Heart right ventricle (tissue), 16 donors: ENCODE measurements at regions of chr2 and their contacts with region 1.

Region 1: DNA sequence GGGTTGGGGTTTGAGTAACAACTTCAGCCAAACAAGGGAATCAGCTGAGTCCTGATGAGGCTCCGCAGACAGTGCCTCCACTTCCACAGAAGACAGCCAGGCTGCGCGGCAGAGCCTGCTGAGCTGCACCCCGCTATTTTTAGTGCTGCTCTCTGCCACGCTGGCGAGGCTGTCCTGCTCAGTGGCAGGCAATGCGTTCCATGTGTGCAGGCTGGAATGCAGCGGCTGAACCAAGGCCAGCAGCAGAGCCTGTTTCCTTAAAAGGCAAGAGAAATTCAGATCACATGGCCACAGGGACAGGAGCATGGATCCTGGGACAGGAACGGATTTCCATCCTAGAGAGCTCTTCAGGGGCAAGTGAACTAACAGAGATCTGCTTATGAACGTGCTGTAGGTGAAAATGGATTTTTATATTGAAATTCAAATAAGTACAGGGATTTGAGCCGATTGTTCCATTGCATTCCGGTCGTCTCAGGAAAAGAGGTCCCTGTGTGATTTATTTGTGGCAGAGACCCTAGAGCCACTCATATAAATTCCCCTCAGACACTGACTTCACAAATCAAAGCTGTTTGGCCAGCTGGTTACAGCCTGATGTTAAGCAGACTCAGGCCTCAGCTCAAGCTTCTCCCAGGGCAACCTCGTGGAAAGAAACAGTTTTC is 98.7 kb downstream of the COL6A3 start:
- DNase-seq: peak; percentile 88 to 91
- ATAC-seq: peak; percentile 93 to 97 (median 95)
- H3K4me3 ChIP-seq: no peak overlapping the region
- H3K27ac ChIP-seq: peak overlapping the region; percentile 85 to 96 (median 88)
- H3K4me1 ChIP-seq: peaks cover 13 to 38% (median 30%) of the 10 kb centered on the region in 9 donors
- H3K27me3 ChIP-seq: no peaks in the 10 kb centered on the region
- CTCF ChIP-seq: peak; percentile 18 to 75 (median 37)

Region 2: DNA sequence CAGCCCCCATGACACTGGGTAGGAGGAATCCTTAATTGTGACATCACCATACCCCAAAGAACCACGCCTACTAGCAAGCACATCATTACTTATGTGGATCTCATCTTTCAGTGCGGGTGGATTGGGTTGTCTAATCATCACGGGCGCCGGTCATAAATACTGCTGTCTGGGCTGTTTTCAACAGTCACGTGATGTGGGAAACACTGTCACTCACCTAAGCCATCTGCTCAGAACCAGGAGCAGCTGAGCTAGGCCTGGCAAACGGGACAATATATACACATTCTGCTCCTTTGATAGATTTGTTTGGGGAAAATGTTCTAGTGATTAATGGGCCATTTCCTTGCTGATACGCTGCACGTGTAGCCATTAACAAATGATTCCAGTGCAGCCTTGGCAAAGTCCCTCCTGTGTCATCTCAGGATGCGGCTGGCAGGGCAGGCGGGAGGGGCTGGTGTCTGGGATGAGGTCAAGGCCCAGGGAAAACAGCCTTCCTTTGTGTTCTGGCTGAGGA is 375.5 kb before region 1 on chr2:
- intact Hi-C with region 1: no loop called
- DNase-seq: no peak
- ATAC-seq: no peak
- H3K4me3 ChIP-seq: no peak overlapping the region
- H3K27ac ChIP-seq: no peak overlapping the region
- H3K4me1 ChIP-seq: no peaks in the 10 kb centered on the region
- H3K27me3 ChIP-seq: peaks cover 0 to 4% (median 0%) of the 10 kb centered on the region in 7 donors
- CTCF ChIP-seq: no peak

Region 3: DNA sequence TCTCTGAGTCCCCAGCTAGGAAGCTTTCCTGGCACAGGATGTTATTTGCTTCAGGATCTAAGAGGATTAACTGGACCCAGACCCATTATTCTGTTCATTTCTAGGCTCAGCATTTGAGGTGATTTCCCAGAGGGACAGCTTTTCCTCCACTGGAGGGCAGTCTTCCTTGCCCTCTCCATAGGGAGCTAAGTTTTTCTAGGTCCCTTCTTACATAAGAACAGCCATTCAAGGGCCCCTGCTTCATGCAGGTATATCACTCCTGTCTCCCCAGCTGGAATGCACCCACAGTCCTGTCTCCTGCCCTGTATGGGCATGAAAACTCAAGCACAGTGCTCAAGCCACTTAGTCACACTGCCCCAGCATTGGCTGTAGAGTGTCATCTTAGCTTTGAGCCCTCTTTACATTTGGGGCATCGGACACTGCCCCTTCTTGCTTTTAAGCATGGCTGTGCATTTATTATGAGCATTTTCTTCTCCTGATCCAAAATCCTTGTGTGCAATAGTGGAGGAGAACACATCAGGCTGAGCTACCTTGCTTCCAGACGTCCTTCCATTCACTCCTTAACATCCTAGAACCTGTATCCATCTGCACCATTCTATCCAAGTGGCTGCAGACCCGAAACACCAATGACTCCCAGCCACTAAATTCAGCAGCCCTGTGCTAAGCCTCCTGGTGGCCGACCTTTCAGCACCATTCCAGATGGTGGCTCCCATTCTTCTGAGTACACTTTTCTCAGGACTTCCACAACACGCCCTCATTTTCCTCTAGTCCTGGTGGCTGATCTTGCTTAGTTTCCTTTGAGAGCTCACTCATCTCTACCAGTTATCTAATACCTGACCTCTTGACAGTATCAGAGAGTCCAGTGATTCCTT is 149.7 kb before region 1 on chr2:
- intact Hi-C with region 1: loop called in 6 of 10 experiments (anchors 5 to 10 kb)
- DNase-seq: no peak
- ATAC-seq: peak in 3 of 8 donors; percentile 12 to 39 (median 33)
- H3K4me3 ChIP-seq: no peak overlapping the region
- H3K27ac ChIP-seq: peak overlapping the region in 7 of 10 donors; percentile 33 to 75 (median 47)
- H3K4me1 ChIP-seq: peaks cover 0 to 12% (median 5%) of the 10 kb centered on the region in 9 donors
- H3K27me3 ChIP-seq: no peaks in the 10 kb centered on the region
- CTCF ChIP-seq: peak; percentile 10 to 61 (median 54)

Region 4: GRCh38 chr2:237201461-237202287 is 113.6 kb before region 1 on chr2:
- intact Hi-C with region 1: loop called in 1 of 10 experiments (anchors 10 kb)
- DNase-seq: peak in 1 of 2 donors; percentile 34
- ATAC-seq: peak in 5 of 8 donors; percentile 36 to 83 (median 60)
- H3K4me3 ChIP-seq: no peak overlapping the region
- H3K27ac ChIP-seq: peak overlapping the region in 5 of 10 donors; percentile 4 to 78 (median 41)
- H3K4me1 ChIP-seq: peaks cover 3 to 38% (median 19%) of the 10 kb centered on the region in 9 donors
- H3K27me3 ChIP-seq: no peaks in the 10 kb centered on the region
- CTCF ChIP-seq: no peak

Region 5: GRCh38 chr2:237291138-237291792 is 24.0 kb before region 1 on chr2:
- intact Hi-C with region 1: loop called in 4 of 10 experiments (anchors 1 to 2 kb)
- DNase-seq: peak; percentile 91 to 98
- ATAC-seq: peak; percentile 94 to 98 (median 96)
- H3K4me3 ChIP-seq: peak overlapping the region in 5 of 10 donors; percentile 1 to 24 (median 10)
- H3K27ac ChIP-seq: peak overlapping the region; percentile 71 to 92 (median 82)
- H3K4me1 ChIP-seq: peaks cover 0 to 40% (median 31%) of the 10 kb centered on the region in 9 donors
- H3K27me3 ChIP-seq: no peaks in the 10 kb centered on the region
- CTCF ChIP-seq: no peak

Region 6: GRCh38 chr2:237563816-237564215 is 248.5 kb after region 1 on chr2:
- intact Hi-C with region 1: no loop called
- DNase-seq: no peak
- ATAC-seq: no peak
- H3K4me3 ChIP-seq: no peak overlapping the region
- H3K27ac ChIP-seq: no peak overlapping the region
- H3K4me1 ChIP-seq: peaks cover 0 to 9% (median 7%) of the 10 kb centered on the region in 9 donors
- H3K27me3 ChIP-seq: peaks cover 0 to 23% (median 6%) of the 10 kb centered on the region in 7 donors
- CTCF ChIP-seq: no peak